ENCODE measurements at regions of chr16 and their contacts with region 1.

Region 1: GRCh38 chr16:58121132-58121531 is 8.0 kb downstream of the CFAP20 start:
- DNase-seq: no peak
- ATAC-seq: no peak
- H3K4me3 ChIP-seq: no peak overlapping the region
- H3K4me3 Mint-ChIP-seq: no peak overlapping the region
- H3K27ac ChIP-seq: no peak overlapping the region
- H3K27ac Mint-ChIP-seq: no peak overlapping the region
- H3K4me1 ChIP-seq: peaks cover 29% of the 10 kb centered on the region
- H3K4me1 Mint-ChIP-seq: peaks cover 63% of the 10 kb centered on the region
- H3K27me3 ChIP-seq: no peaks in the 10 kb centered on the region
- H3K27me3 Mint-ChIP-seq: no peaks in the 10 kb centered on the region
- CTCF ChIP-seq: no peak

Region 2: DNA sequence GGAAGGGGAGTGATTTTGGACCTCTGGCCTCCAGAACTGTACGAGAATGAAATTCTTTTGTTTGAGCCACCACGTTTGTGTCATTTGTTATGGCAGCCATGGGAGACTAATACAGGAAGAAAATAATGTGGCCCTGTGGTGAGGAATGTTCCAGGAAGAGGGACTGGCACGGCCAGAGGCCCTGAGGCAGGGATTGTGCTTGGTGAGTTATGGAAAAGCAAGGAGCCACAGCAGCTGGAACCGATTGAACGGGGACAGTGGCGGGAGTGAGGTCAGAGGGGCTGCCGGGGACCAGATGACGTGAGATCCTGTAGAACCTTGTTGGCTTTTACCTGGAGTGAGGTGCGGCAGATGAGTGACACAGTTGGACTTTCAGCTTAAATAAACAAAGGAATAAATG is 43.3 kb before region 1 on chr16:
- CTCF ChIA-PET with region 1: no interaction called
- POLR2A ChIA-PET with region 1: no interaction called
- intact Hi-C with region 1: no loop called
- DNase-seq: no peak
- ATAC-seq: no peak
- H3K4me3 ChIP-seq: no peak overlapping the region
- H3K4me3 Mint-ChIP-seq: no peak overlapping the region
- H3K27ac ChIP-seq: no peak overlapping the region
- H3K27ac Mint-ChIP-seq: no peak overlapping the region
- H3K4me1 ChIP-seq: no peaks in the 10 kb centered on the region
- H3K4me1 Mint-ChIP-seq: no peaks in the 10 kb centered on the region
- H3K27me3 ChIP-seq: no peaks in the 10 kb centered on the region
- H3K27me3 Mint-ChIP-seq: no peaks in the 10 kb centered on the region
- CTCF ChIP-seq: no peak

Region 3: DNA sequence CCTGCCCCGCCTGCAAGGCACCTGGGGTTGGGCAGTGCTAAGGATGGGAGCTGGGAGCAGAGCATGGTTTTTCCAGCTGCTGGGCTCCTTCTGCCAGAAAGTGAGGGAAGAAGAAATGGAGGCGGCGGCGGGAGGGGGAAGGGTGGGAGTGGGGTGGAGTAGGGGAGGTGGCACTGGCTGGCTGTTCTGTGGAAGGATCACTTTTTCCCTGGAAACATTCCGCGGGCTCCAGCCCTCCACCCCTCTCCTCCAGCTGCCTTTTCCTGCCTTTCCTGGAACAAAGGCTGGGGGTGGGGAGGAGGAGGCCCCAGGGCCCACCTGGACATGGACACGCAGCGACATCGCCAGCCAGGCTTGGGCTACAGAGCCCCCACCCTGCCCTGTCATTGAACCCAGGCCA is 33.0 kb before region 1 on chr16:
- CTCF ChIA-PET with region 1: no interaction called
- POLR2A ChIA-PET with region 1: no interaction called
- intact Hi-C with region 1: no loop called
- DNase-seq: no peak
- ATAC-seq: no peak
- H3K4me3 ChIP-seq: no peak overlapping the region
- H3K4me3 Mint-ChIP-seq: no peak overlapping the region
- H3K27ac ChIP-seq: no peak overlapping the region
- H3K27ac Mint-ChIP-seq: no peak overlapping the region
- H3K4me1 ChIP-seq: no peaks in the 10 kb centered on the region
- H3K4me1 Mint-ChIP-seq: no peaks in the 10 kb centered on the region
- H3K27me3 ChIP-seq: no peaks in the 10 kb centered on the region
- H3K27me3 Mint-ChIP-seq: no peaks in the 10 kb centered on the region
- CTCF ChIP-seq: no peak

Region 4: DNA sequence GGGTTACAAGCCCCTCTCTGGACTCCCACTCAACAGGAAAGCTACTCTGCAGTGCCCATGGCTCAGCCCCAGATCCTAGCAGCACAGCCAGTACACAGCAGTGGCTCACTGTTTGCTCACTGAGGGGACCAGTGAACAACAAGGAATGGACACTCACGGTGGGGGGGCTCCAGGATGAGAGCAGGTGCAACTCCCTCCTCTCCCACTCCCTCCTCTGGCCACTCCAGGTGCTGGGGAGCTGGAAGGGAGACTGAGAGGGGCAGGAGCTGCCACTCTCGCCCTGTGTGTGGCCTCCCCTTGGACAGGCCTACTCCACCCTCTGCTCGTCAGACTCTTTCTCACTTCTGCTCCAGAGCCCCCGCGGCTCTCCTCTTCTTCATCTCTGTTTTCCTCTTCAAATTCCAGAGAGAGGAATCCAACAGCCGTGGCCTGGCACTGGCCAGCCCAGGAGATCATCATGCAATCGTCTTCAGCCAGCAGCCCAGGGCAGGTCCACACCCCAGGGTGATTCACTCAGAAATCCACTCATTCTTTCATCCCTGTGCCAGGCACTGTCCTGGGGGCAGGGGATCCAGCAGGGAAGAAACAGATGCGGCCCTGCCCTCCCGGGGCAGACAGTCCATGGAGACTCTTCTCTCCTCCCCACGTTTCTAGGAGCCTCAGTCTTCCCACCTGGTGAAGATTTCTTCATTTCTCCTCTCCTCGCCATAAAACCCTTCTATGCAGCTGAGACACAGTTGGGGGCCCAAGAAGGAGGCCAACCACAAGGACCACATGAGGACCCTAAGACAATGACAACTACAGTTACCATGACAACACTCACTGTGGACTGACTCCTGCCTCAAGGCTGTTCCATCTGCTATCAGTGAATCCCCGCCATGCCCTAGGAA is 22.7 kb before region 1 on chr16:
- CTCF ChIA-PET with region 1: interaction called, 21 read pairs
- POLR2A ChIA-PET with region 1: no interaction called
- intact Hi-C with region 1: no loop called
- DNase-seq: no peak
- ATAC-seq: no peak
- H3K4me3 ChIP-seq: no peak overlapping the region
- H3K4me3 Mint-ChIP-seq: no peak overlapping the region
- H3K27ac ChIP-seq: no peak overlapping the region
- H3K27ac Mint-ChIP-seq: no peak overlapping the region
- H3K4me1 ChIP-seq: no peaks in the 10 kb centered on the region
- H3K4me1 Mint-ChIP-seq: peaks cover 5% of the 10 kb centered on the region
- H3K27me3 ChIP-seq: no peaks in the 10 kb centered on the region
- H3K27me3 Mint-ChIP-seq: peaks cover 7% of the 10 kb centered on the region
- CTCF ChIP-seq: no peak

Region 5: GRCh38 chr16:58678716-58679115 is 557.6 kb after region 1 on chr16:
- CTCF ChIA-PET with region 1: no interaction called
- POLR2A ChIA-PET with region 1: no interaction called
- intact Hi-C with region 1: no loop called
- DNase-seq: no peak
- ATAC-seq: no peak
- H3K4me3 ChIP-seq: no peak overlapping the region
- H3K4me3 Mint-ChIP-seq: no peak overlapping the region
- H3K27ac ChIP-seq: no peak overlapping the region
- H3K27ac Mint-ChIP-seq: no peak overlapping the region
- H3K4me1 ChIP-seq: peaks cover 5% of the 10 kb centered on the region
- H3K4me1 Mint-ChIP-seq: peaks cover 9% of the 10 kb centered on the region
- H3K27me3 ChIP-seq: no peaks in the 10 kb centered on the region
- H3K27me3 Mint-ChIP-seq: no peaks in the 10 kb centered on the region
- CTCF ChIP-seq: no peak

Measured in CD4-positive, alpha-beta T cell (primary cell).